ENCODE measurements at regions of chr1 and their contacts with region 1.

Region 1: GRCh38 chr1:244047621-244048471 is 3.2 kb upstream of the ZBTB18 start:
- DNase-seq: peak; percentile 90
- ATAC-seq: peak; percentile 90
- H3K4me3 Mint-ChIP-seq: peak overlapping the region; percentile 94
- H3K27ac Mint-ChIP-seq: peak overlapping the region; percentile 100
- H3K4me1 Mint-ChIP-seq: peaks cover 32% of the 10 kb centered on the region
- H3K27me3 Mint-ChIP-seq: peaks cover 3% of the 10 kb centered on the region

Region 2: GRCh38 chr1:243255791-243256512 is 791.9 kb before region 1 on chr1 and contains the start of gene SDCCAG8:
- POLR2A ChIA-PET with region 1: interaction called, 14 read pairs
- DNase-seq: peak; percentile 88
- ATAC-seq: peak; percentile 78
- H3K4me3 Mint-ChIP-seq: peak within 1 kb of the TSS; percentile 97
- H3K27ac Mint-ChIP-seq: peak within 1 kb of the TSS; percentile 99
- H3K4me1 Mint-ChIP-seq: peaks cover 32% of the 10 kb centered on the region
- H3K27me3 Mint-ChIP-seq: no peaks in the 10 kb centered on the region
- total RNA-seq, gene SDCCAG8: 27.3 to 32.7 TPM